Transverse colon (tissue), 4 donors: ENCODE measurements at regions of chr15 and their contacts with region 1.

Region 1: DNA sequence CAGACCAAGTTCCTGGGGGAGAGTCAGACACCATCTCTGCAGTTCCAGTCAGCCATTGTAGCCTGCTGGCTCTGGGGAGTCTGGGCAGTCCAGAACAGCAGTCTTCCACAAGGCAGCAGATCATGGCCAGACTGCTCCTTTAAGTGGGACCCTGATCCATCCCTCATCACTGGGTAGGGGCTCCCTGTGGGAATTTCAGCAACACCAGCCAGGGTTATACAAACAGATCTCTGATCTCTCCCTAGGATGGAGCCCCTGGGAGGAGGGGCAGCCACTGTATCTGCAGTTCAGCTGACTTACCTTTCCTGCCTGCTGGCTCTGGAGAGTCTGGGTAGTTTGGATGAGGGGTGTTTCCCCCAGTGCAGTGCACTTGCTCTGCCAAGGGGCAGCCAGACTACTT is 42.1 kb upstream of the UNC13C start:
- DNase-seq: no peak
- H3K4me3 ChIP-seq: no peak overlapping the region
- H3K27ac ChIP-seq: no peak overlapping the region
- H3K4me1 ChIP-seq: no peaks in the 10 kb centered on the region
- H3K27me3 ChIP-seq: no peaks in the 10 kb centered on the region
- CTCF ChIP-seq: no peak
- EP300 ChIP-seq: no peak
- POLR2A ChIP-seq: no peak

Region 2: DNA sequence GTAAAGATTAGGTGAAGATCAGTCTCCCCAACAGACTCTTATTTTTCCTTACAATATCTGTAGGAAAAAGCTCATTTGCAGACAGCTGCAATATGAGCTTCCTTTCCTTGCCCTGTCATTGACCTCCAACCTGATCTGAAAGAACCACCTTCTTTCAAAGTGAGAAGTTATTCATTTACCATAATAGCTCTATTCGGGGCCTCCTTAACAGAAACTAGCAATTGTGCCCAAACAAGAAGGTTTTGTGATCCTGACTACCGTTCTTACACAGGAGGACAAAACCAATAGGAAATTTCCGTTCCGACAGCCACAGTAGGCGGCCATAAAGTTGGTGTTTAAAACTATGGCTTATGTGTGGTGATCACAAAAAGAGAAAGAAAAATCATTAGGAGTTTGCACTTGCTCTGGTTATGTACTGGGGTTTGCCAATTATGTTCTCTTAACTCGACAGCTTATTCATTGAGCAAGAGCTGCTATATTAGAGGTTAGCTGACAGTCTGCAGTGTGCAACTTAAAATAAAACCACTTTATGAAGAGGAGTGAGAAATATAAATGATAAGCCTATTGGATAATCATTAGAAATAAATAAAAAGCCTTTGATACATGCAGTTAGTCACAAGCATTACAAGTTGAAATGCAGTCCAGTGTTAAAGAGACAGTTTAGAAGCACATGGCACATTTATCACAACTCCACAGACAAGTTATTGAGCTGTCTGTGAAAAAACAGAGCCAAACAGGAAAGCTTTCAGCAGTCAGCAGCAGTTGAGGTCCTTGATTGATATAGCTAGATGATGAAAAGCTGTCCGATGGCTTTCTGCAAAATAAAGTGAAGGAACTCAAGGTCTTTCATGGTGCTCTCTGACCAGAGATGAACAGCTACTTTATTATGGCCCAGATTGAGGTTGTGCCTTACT is 376.5 kb before region 1 on chr15:
- in situ Hi-C with region 1: no loop called
- intact Hi-C with region 1: no loop called
- DNase-seq: no peak
- H3K4me3 ChIP-seq: no peak overlapping the region
- H3K27ac ChIP-seq: peak overlapping the region; percentile 60 to 76 (median 67)
- H3K4me1 ChIP-seq: peaks cover 0 to 19% (median 14%) of the 10 kb centered on the region in 4 donors
- H3K27me3 ChIP-seq: no peaks in the 10 kb centered on the region
- CTCF ChIP-seq: no peak
- EP300 ChIP-seq: no peak
- POLR2A ChIP-seq: no peak

Region 3: DNA sequence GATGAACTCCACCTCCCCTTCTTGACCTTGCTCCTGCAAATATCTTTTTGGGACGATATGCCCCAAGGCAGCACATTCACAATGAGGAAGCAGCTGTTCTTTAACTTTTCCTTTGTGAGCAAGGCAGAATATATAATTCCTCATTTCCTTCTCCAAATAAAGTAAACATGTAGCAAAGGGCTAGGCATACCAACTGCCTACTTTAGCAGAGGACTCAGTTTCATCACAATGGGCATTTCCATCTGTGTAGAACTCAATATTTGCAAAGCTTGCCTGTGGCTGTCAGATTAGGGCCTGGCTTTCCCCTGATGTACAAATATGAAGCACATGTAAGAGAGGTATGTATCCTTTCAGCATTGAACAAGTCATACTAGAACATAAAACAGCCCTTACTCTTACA is 893.7 kb after region 1 on chr15:
- in situ Hi-C with region 1: no loop called
- intact Hi-C with region 1: loop called (anchors 5 kb)
- DNase-seq: no peak
- H3K4me3 ChIP-seq: no peak overlapping the region
- H3K27ac ChIP-seq: no peak overlapping the region
- H3K4me1 ChIP-seq: no peaks in the 10 kb centered on the region
- H3K27me3 ChIP-seq: no peaks in the 10 kb centered on the region
- CTCF ChIP-seq: no peak
- EP300 ChIP-seq: no peak
- POLR2A ChIP-seq: no peak